ENCODE measurements at regions of chr4 and their contacts with region 1.

Region 1: DNA sequence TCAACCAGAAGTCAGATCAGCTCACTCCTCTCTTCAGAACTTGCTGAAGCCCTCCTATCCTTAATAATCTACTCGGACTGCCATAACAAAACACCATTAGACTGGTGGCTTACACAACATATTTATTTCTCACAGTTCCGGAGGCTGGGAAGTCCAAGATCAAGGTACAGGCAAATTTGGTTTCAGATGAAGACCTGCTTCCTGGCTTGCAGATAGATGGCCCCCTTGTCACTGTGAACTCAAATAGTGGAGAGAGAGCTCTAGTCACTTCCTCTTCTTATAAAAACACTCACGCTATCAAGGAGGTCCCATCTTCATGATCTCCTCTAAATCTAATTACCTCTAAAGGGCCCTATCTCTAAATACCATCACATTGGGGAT is 125.1 kb downstream of the CAMK2D start:
- DNase-seq: no peak
- H3K4me3 ChIP-seq: peak overlapping the region in 1 of 8 donors; percentile 30
- H3K27ac ChIP-seq: peak overlapping the region in 6 of 8 donors; percentile 30 to 85 (median 72)
- H3K4me1 ChIP-seq: peaks cover 15 to 72% (median 59%) of the 10 kb centered on the region in 6 donors
- H3K27me3 ChIP-seq: no peaks in the 10 kb centered on the region
- CTCF ChIP-seq: peak in 8 of 11 experiments; percentile 16 to 51 (median 27)
- POLR2A ChIP-seq: no peak

Region 2: DNA sequence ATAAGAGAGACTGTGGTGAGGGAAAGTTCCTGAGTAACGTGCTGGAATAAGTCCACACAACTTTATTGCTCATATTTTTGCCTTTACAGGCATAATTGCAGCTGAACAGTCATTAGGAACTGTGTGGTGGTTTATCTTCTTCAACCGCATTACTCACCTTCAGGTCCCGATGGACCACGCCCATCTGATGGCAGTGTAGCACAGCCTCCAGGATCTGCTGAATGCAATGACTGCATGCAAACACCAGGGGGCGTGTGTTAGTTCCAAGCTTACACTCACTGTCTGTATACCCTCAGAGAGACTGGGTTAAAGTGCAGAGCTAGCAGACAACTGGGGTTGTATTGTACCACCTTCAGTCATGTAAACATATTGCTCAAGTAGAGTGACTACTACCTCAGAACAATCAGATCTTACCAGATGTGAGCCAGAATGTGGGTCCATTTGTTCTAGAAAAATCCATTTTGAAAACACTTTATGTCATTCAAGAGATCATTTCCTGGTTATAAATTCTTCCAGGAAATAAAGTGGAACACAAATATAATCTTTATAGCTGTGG is 88.9 kb before region 1 on chr4:
- intact Hi-C with region 1: loop called (anchors 10 kb)
- DNase-seq: peak; percentile 94
- H3K4me3 ChIP-seq: no peak overlapping the region
- H3K27ac ChIP-seq: peak overlapping the region; percentile 6 to 62 (median 37)
- H3K4me1 ChIP-seq: peaks cover 3 to 18% (median 10%) of the 10 kb centered on the region in 6 donors
- H3K27me3 ChIP-seq: no peaks in the 10 kb centered on the region
- CTCF ChIP-seq: peak; percentile 94 to 98 (median 97)
- POLR2A ChIP-seq: no peak

Measured in spleen (tissue), 13 donors.